RWPE1 (cell line): ENCODE measurements at regions of chr1 and their contacts with region 1.

Region 1: DNA sequence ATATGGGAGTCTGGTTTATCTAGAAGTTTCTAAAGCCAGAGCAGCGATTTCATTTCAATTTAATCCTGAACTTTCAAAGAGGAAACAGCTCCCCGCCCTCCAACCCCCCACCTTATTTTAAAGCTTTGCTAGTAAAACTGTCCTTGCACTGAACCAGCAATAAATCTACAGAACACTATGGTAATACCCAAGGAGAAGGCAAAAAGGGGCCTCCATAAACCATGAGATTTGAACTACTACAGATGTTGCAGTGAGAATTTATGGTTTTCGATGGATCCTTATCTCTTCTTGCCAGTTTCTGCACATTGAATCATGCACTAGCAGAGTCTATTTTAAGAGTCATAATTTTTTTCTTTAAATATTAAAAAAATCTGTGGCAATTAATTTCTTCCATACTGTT is 64.8 kb upstream of the BEND5 start:
- DNase-seq: no peak
- H3K27ac ChIP-seq: no peak overlapping the region
- CTCF ChIP-seq: no peak

Region 2: GRCh38 chr1:48831120-48831978 is 10.1 kb before region 1 on chr1:
- CTCF ChIA-PET with region 1: no interaction called
- POLR2A ChIA-PET with region 1: no interaction called
- DNase-seq: peak; percentile 4
- H3K27ac ChIP-seq: no peak overlapping the region
- CTCF ChIP-seq: no peak

Region 3: GRCh38 chr1:48851638-48852037 is 10.2 kb after region 1 on chr1:
- CTCF ChIA-PET with region 1: no interaction called
- POLR2A ChIA-PET with region 1: interaction called, 15 read pairs
- DNase-seq: no peak
- H3K27ac ChIP-seq: no peak overlapping the region
- CTCF ChIP-seq: no peak